Right ventricle myocardium inferior (tissue), 1 donor: ENCODE measurements at regions of chr16 and their contacts with region 1.

Region 1: GRCh38 chr16:9047686-9048301 is 43.6 kb upstream of the HAPSTR1 start:
- DNase-seq: peak; percentile 93
- ATAC-seq: peak; percentile 99

Region 2: DNA sequence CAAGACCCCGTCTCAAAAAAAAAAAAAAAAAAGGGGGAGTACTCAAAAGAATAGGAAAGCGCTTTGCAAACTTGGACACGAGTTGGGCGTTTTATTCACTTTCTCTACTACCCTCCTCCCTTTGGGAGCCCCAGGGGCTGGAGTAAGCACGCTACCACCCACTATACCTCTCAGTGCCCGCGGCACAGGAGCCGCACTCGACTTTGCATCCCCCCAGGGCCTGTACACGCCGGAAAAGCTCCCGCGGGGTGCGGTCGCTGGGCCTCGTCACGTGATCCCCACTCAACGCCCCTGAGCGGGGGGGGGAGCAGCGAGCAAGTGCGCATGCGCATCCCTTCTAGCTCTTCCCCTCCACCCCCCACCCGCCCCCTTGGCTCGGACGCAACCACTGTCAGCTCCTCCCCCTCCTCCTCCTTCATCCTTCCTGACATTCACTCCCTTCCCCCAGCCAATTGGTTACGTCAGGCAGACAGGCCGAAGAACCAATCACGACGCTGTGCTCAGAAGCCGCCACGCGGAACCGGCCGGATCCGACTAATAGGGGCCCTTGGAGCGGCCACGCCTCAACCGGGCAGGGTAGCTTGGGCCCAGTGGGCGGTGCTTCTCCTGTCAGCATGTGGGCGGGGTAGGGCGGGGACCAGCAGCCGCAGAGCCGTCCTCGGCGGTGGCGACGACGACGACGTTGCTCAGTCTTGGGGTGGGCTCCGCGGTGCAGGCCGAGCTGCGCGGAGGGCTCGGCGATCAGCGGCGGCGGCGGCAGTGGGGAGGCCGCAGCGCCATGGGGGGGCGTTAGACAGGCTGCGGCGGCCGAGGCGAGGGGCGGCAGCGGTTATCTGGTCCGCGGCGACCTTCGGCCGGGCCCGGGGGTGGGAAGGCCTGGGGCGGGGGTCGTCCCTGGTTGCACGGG is 43.4 kb after region 1 on chr16 and contains the start of gene HAPSTR1:
- intact Hi-C with region 1: loop called (anchors 5 kb)
- DNase-seq: peak; percentile 100
- ATAC-seq: peak; percentile 96
- total RNA-seq, gene HAPSTR1: 52.5 TPM